Sciatic nerve (tissue), 2 donors: ENCODE measurements at regions of chr1 and their contacts with region 1.

Region 1: GRCh38 chr1:226827968-226828513 is 42.4 kb upstream of the PSEN2 start:
- DNase-seq: peak; percentile 98
- ATAC-seq: peak; percentile 97

Region 2: DNA sequence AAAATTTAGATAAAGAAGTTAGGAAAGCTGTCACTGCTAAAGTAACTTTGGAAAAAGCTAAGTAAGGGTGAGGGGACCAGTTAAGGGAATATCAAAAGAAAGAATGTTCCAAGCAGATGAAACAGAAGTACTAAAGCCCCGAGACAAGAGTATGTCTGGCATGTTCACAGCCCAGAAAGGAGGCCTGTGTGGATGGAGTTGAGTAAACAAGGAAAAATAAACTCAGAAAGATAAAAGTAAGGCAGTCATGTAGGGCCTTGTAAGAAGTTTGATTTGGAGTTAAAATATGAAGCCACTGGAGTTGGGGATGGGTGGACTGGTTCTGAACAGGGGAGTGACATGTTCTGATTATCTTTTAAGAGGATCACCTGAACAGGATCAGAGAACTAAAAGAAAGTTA is 312.3 kb after region 1 on chr1:
- intact Hi-C with region 1: no loop called
- DNase-seq: no peak
- ATAC-seq: no peak

Region 3: DNA sequence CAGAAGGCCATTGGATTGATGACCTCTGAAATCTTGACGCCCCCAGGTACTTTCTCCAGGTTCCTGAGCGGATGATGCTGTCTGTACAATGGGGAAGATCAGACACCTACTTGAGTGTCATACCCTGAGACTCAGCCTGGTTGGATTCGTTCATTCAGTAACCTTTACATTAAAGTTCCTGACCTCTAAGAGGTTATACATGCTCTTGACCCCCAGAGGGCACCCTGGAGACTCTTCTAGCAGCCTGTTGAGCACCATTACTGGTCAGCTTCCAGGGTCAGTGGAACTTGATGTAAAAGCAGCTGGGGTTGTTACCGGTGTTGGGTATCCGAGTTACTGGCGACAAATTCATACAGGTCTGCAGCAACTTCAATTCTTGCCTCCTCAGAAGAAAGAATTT is 621.0 kb after region 1 on chr1:
- intact Hi-C with region 1: loop called (anchors 10 kb)
- DNase-seq: no peak
- ATAC-seq: no peak